Adrenal gland (tissue), 19 donors: ENCODE measurements at regions of chr10 and their contacts with region 1.

Region 1: GRCh38 chr10:104406715-104407650 is 53.4 kb downstream of the CFAP58 start:
- DNase-seq: peak in 1 of 7 donors; percentile 8
- H3K4me3 ChIP-seq: no peak overlapping the region
- H3K27ac ChIP-seq: no peak overlapping the region
- H3K4me1 ChIP-seq: no peaks in the 10 kb centered on the region
- H3K27me3 ChIP-seq: no peaks in the 10 kb centered on the region
- CTCF ChIP-seq: peak; percentile 47 to 84 (median 74)
- POLR2A ChIP-seq: no peak

Region 2: GRCh38 chr10:104580774-104581675 is 174.0 kb after region 1 on chr10:
- intact Hi-C with region 1: loop called in 1 of 2 experiments (anchors 10 kb)
- DNase-seq: peak; percentile 63 to 91 (median 79)
- H3K4me3 ChIP-seq: no peak overlapping the region
- H3K27ac ChIP-seq: no peak overlapping the region
- H3K4me1 ChIP-seq: no peaks in the 10 kb centered on the region
- H3K27me3 ChIP-seq: peaks cover 10% of the 10 kb centered on the region
- CTCF ChIP-seq: peak; percentile 60 to 93 (median 71)
- POLR2A ChIP-seq: no peak